WTC11 (cell line): ENCODE measurements at regions of chr4 and their contacts with region 1.

Region 1: DNA sequence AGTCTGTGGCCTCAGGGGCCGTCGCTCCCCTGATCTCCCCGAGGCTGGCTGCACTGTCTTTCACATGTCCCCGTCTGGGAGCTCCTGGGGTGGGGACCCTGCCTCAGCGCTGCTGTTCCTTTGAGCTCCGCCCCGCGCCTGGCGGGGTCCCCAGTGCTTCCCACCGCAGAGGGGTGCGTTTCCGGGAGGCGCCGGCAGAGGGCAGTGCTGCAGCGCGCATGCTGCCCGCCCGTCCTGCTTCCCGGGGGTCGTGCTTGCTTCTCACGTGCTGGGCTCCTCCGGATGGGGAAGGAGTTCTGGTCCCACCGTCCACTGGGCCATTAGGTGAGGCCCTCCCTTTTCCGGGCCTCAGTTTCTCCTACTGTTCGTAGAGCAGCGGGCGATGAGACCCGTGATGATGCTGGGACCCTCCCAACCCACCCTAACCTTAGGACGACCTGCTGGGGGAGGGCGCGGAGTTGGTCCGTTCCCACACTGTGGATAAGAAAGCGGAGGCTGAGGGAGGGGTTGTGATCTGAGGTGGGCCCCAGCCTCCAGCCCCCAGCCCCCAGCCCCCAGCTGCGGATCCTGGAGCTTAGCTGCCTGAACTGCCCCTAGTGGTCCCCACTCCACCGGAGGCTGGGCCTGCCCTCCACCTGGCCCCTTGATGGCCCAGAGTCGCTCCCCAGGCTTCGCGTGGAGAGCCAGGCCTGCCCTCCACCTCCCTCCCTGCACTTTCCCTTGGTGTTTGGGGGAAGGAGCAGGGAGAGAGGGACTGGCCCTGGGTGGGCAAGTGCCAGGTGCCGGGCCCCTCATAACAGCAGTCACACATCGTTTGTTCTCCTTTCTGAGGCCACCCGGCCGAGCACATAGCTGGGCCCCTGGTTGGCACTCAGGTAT is 15.3 kb downstream of the CPZ start:
- DNase-seq: peak; percentile 89
- ATAC-seq: peak; percentile 88
- H3K4me3 Mint-ChIP-seq: no peak overlapping the region
- H3K27ac Mint-ChIP-seq: no peak overlapping the region
- H3K4me1 Mint-ChIP-seq: no peaks in the 10 kb centered on the region
- H3K27me3 Mint-ChIP-seq: peaks cover 3% of the 10 kb centered on the region; the same call in 1 of the 2 replicates
- CTCF ChIP-seq: peak; percentile 98

Region 2: GRCh38 chr4:8395504-8396296 is 212.1 kb before region 1 on chr4:
- CTCF ChIA-PET with region 1: no interaction called
- POLR2A ChIA-PET with region 1: no interaction called
- DNase-seq: no peak
- ATAC-seq: no peak
- H3K4me3 Mint-ChIP-seq: no peak overlapping the region
- H3K27ac Mint-ChIP-seq: no peak overlapping the region
- H3K4me1 Mint-ChIP-seq: peaks cover 27% of the 10 kb centered on the region
- H3K27me3 Mint-ChIP-seq: no peaks in the 10 kb centered on the region
- CTCF ChIP-seq: no peak

Region 3: GRCh38 chr4:8410641-8411271 is 197.1 kb before region 1 on chr4:
- CTCF ChIA-PET with region 1: interaction called, 11 read pairs
- POLR2A ChIA-PET with region 1: no interaction called
- DNase-seq: peak; percentile 85
- ATAC-seq: peak; percentile 92
- H3K4me3 Mint-ChIP-seq: no peak overlapping the region
- H3K27ac Mint-ChIP-seq: peak overlapping the region; percentile 95
- H3K4me1 Mint-ChIP-seq: peaks cover 9% of the 10 kb centered on the region
- H3K27me3 Mint-ChIP-seq: peaks cover 2% of the 10 kb centered on the region; the same call in 1 of the 2 replicates
- CTCF ChIP-seq: no peak

Region 4: DNA sequence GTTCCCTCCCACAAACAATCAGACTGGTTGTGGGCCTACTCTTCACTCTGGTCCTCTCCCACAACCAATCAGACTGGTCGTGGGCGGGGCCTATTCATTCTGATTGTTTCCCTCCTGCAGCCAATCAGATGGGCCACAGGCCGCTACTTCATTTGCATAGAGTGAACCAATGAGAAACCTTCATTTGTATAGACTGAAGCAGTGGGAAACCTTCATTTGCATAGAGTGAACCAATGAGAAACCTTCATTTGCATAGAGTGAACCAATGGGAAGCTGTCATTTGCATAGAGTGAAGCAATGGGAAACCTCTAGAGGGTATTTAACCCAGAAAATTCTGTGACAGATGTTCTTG is 112.0 kb before region 1 on chr4:
- CTCF ChIA-PET with region 1: interaction called, 26 read pairs
- POLR2A ChIA-PET with region 1: no interaction called
- DNase-seq: no peak
- ATAC-seq: peak; percentile 23
- H3K4me3 Mint-ChIP-seq: no peak overlapping the region
- H3K27ac Mint-ChIP-seq: no peak overlapping the region; the same call in 1 of the 2 replicates
- H3K4me1 Mint-ChIP-seq: peaks cover 44% of the 10 kb centered on the region
- H3K27me3 Mint-ChIP-seq: peaks cover 3% of the 10 kb centered on the region; the same call in 1 of the 2 replicates
- CTCF ChIP-seq: no peak

Region 5: GRCh38 chr4:8512515-8512914 is 95.3 kb before region 1 on chr4:
- CTCF ChIA-PET with region 1: no interaction called
- POLR2A ChIA-PET with region 1: no interaction called
- DNase-seq: no peak
- ATAC-seq: no peak
- H3K4me3 Mint-ChIP-seq: no peak overlapping the region
- H3K27ac Mint-ChIP-seq: no peak overlapping the region
- H3K4me1 Mint-ChIP-seq: peaks cover 3% of the 10 kb centered on the region
- H3K27me3 Mint-ChIP-seq: no peaks in the 10 kb centered on the region
- CTCF ChIP-seq: no peak

Region 6: DNA sequence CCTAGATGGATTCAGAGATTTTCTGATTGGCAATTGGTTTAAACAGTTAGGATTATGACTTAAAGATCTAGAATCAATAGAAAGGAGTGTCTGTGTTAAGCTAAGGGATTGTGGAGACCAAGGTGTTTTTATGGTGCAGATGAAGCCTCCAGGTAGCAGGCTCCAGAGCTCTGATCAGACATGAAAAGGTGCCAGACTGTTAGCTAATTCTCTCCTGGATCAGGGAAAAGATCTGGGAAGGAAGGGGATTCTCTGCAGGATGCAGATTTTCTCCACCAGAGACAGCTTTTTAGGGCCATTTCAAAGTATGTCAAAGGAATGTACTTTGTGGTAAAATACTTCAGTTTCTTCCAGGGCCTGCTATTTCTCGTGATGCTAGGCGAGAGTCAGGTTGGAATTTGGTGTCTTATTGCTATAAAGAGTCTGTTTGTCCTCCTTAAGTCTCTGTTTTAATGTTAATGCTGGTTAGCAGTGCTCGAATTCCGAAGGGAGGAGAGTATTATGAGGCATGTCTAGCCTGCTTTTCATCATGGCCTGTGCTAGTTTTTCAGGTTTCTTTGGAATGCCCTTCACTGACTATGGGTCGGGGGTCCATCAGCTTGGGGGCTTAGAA is 39.7 kb before region 1 on chr4:
- CTCF ChIA-PET with region 1: interaction called, 10 read pairs
- POLR2A ChIA-PET with region 1: no interaction called
- DNase-seq: no peak
- ATAC-seq: peak; percentile 96
- H3K4me3 Mint-ChIP-seq: peak overlapping the region; percentile 3; the same call in 1 of the 2 replicates
- H3K27ac Mint-ChIP-seq: peak overlapping the region; percentile 96
- H3K4me1 Mint-ChIP-seq: peaks cover 36% of the 10 kb centered on the region
- H3K27me3 Mint-ChIP-seq: no peaks in the 10 kb centered on the region
- CTCF ChIP-seq: no peak

Region 7: DNA sequence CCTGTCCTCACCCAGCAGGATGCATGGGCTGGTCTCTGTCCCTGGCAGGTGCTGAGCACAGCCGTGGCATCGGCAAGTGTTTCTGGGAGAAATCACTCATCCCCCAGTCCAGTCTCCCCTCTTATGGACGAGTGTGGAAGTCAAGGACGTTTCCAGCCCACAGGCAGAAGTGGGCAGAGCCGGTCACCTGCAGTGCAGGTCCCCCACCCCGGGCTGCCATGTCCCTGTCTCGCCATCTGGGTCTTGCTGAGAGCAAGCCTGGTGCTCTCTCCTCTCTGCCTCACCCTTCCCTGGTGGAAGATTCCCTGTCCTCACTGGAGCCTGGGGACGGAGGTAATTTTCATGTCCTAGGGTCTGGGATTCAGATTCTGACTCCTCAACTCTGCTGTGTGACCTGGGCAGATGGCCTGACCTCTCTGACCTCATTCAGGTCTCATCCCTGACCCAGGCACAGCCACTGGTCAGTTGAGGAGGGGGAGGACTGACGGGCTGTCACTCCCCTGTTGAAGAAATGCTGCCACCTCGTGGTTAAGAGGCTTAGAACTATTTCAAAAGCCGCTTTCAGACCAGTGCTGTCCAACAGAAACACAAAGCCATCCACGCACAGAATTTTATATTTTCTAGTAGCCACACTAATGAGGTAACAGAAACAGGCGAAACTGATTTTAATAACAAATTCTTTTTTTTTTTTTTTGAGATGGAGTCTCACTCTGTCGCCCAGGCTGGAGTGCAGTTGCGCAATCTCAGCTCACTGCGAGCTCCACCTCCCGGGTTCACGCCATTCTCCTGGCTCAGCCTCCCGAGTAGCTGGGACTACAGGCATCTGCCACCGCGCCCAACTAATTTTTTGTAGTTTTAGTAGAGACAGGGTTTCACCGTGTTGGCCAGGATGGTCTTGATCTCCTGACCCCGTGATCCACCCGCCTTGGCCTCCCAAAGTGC is 13.5 kb before region 1 on chr4:
- CTCF ChIA-PET with region 1: interaction called, 39 read pairs
- POLR2A ChIA-PET with region 1: interaction called, 3 read pairs
- DNase-seq: peak; percentile 70
- ATAC-seq: peak; percentile 35
- H3K4me3 Mint-ChIP-seq: peak overlapping the region; percentile 62
- H3K27ac Mint-ChIP-seq: no peak overlapping the region
- H3K4me1 Mint-ChIP-seq: peaks cover 27% of the 10 kb centered on the region
- H3K27me3 Mint-ChIP-seq: no peaks in the 10 kb centered on the region; the same call in 1 of the 2 replicates
- CTCF ChIP-seq: peak; percentile 32; the same call in 1 of the 2 replicates

Region 8: GRCh38 chr4:8664976-8665375 is 57.1 kb after region 1 on chr4:
- CTCF ChIA-PET with region 1: interaction called, 13 read pairs
- POLR2A ChIA-PET with region 1: no interaction called
- DNase-seq: no peak
- ATAC-seq: peak; percentile 48
- H3K4me3 Mint-ChIP-seq: no peak overlapping the region
- H3K27ac Mint-ChIP-seq: no peak overlapping the region
- H3K4me1 Mint-ChIP-seq: peaks cover 15% of the 10 kb centered on the region
- H3K27me3 Mint-ChIP-seq: peaks cover 40% of the 10 kb centered on the region
- CTCF ChIP-seq: no peak

Region 9: DNA sequence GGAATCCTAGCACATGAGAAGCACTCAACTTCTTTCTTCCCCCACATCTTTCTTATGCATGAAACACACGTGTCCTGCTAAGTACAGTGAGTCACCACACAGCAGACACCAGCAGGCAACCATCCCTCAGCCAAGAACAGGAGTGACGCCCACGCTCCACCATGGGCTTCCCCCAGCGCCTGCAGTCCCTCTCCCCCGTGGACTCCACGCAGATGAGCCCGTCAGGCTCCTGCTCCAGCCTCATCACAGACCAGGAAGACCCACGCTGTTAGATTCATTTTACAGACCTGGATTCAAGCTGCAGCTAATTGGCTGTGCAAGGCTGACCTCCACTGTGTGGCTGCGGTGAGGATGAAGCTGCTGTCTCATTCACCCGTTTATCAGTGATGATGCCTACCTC is 247.1 kb after region 1 on chr4:
- CTCF ChIA-PET with region 1: interaction called, 10 read pairs
- POLR2A ChIA-PET with region 1: no interaction called
- DNase-seq: no peak
- ATAC-seq: no peak
- H3K4me3 Mint-ChIP-seq: no peak overlapping the region
- H3K27ac Mint-ChIP-seq: no peak overlapping the region
- H3K4me1 Mint-ChIP-seq: peaks cover 30% of the 10 kb centered on the region
- H3K27me3 Mint-ChIP-seq: peaks cover 82% of the 10 kb centered on the region
- CTCF ChIP-seq: no peak